Activated CD4-positive, alpha-beta T cell treated with anti-CD3 and anti-CD28 coated beads for 36 hours (primary cell): ENCODE measurements at regions of chr7 and their contacts with region 1.

Region 1: GRCh38 chr7:4641667-4642467 is 40.2 kb upstream of the FOXK1 start:
- DNase-seq: peak; percentile 97
- ATAC-seq: peak; percentile 89
- H3K4me3 Mint-ChIP-seq: peak overlapping the region; percentile 91
- H3K27ac Mint-ChIP-seq: peak overlapping the region; percentile 95
- H3K4me1 Mint-ChIP-seq: peaks cover 9% of the 10 kb centered on the region
- H3K27me3 Mint-ChIP-seq: no peaks in the 10 kb centered on the region

Region 2: GRCh38 chr7:3013975-3014792 is 1627.7 kb before region 1 on chr7:
- CTCF ChIA-PET with region 1: no interaction called
- POLR2A ChIA-PET with region 1: no interaction called
- intact Hi-C with region 1: no loop called
- DNase-seq: no peak
- ATAC-seq: no peak
- H3K4me3 Mint-ChIP-seq: no peak overlapping the region
- H3K27ac Mint-ChIP-seq: peak overlapping the region; percentile 31
- H3K4me1 Mint-ChIP-seq: peaks cover 41% of the 10 kb centered on the region
- H3K27me3 Mint-ChIP-seq: no peaks in the 10 kb centered on the region

Region 3: GRCh38 chr7:4610768-4611467 is 30.9 kb before region 1 on chr7:
- CTCF ChIA-PET with region 1: no interaction called
- POLR2A ChIA-PET with region 1: no interaction called
- intact Hi-C with region 1: loop called in 1 of 2 experiments (anchors 2 kb)
- DNase-seq: peak; percentile 59
- ATAC-seq: peak; percentile 77
- H3K4me3 Mint-ChIP-seq: no peak overlapping the region
- H3K27ac Mint-ChIP-seq: no peak overlapping the region
- H3K4me1 Mint-ChIP-seq: peaks cover 14% of the 10 kb centered on the region
- H3K27me3 Mint-ChIP-seq: no peaks in the 10 kb centered on the region

Region 4: DNA sequence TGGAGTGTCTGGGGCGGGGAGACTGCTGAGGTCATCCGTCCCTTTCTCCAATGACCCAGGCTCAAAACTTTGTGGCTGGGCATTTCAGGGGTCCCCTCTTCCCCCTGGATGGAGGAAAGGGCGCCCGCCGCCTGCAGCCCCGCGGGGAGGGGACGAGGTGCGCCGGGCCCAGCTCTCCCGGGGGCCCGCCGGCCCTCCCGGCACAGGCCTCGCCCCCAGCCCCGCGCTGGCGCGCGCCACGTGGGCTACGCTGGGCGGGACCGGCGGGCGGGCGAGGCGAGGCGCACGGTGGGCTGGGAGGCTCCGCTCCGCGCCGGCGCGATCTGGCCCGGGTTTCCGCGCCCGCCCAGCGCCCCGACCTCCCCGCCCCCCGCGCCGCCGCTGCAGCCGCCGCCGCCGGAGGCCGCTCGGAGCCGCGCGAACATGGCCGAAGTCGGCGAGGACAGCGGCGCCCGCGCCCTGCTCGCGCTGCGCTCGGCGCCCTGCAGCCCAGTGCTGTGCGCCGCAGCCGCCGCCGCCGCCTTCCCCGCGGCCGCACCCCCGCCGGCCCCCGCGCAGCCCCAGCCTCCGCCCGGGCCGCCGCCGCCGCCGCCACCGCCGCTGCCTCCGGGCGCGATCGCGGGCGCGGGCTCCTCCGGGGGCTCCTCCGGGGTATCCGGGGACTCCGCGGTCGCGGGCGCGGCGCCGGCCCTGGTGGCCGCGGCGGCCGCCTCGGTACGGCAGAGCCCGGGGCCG is 40.2 kb after region 1 on chr7 and contains the start of gene FOXK1:
- CTCF ChIA-PET with region 1: interaction called, 10 read pairs
- POLR2A ChIA-PET with region 1: interaction called, 16 read pairs
- intact Hi-C with region 1: loop called (anchors 1 kb)
- DNase-seq: peak; percentile 90
- ATAC-seq: peak; percentile 78
- H3K4me3 Mint-ChIP-seq: peak within 1 kb of the TSS; percentile 91
- H3K27ac Mint-ChIP-seq: peak within 1 kb of the TSS; percentile 98
- H3K4me1 Mint-ChIP-seq: peaks cover 30% of the 10 kb centered on the region
- H3K27me3 Mint-ChIP-seq: no peaks in the 10 kb centered on the region
- total RNA-seq, gene FOXK1: 30.0 to 33.9 TPM

Region 5: GRCh38 chr7:4753711-4754432 is 112.0 kb after region 1 on chr7:
- CTCF ChIA-PET with region 1: interaction called, 3 read pairs
- POLR2A ChIA-PET with region 1: no interaction called
- intact Hi-C with region 1: loop called (anchors 1 to 5 kb)
- DNase-seq: peak; percentile 94
- ATAC-seq: peak; percentile 97
- H3K4me3 Mint-ChIP-seq: no peak overlapping the region
- H3K27ac Mint-ChIP-seq: no peak overlapping the region
- H3K4me1 Mint-ChIP-seq: peaks cover 21% of the 10 kb centered on the region
- H3K27me3 Mint-ChIP-seq: no peaks in the 10 kb centered on the region

Region 6: DNA sequence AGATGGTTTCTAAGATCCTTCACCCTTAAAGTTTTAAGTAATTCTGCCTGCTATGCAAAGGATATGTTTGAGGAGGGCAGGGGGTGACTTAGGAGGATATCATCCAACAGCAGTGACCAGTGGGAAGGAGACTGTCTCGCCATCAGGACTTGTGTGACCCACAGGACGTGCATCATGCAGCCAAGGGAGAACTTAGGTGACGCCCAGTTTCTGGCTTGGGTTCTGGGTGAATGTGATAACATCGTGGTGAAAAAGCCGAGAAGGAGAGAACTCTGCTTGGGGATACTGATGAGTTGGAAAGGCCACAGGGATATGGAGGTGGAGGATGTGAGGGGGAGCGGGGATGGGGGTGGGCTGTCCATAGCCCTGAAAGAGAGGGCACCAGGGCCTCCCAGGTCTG is 552.0 kb after region 1 on chr7:
- CTCF ChIA-PET with region 1: no interaction called
- POLR2A ChIA-PET with region 1: no interaction called
- intact Hi-C with region 1: loop called in 1 of 2 experiments (anchors 10 kb)
- DNase-seq: no peak
- ATAC-seq: no peak
- H3K4me3 Mint-ChIP-seq: no peak overlapping the region
- H3K27ac Mint-ChIP-seq: peak overlapping the region; percentile 6
- H3K4me1 Mint-ChIP-seq: peaks cover 21% of the 10 kb centered on the region
- H3K27me3 Mint-ChIP-seq: no peaks in the 10 kb centered on the region